ENCODE measurements at regions of chr19 and their contacts with region 1.

Region 1: GRCh38 chr19:28985201-28985600 is 227.8 kb downstream of the UQCRFS1 start:
- DNase-seq: no peak
- ATAC-seq: no peak
- H3K4me3 Mint-ChIP-seq: no peak overlapping the region
- H3K27ac Mint-ChIP-seq: no peak overlapping the region
- H3K4me1 Mint-ChIP-seq: no peaks in the 10 kb centered on the region
- H3K27me3 Mint-ChIP-seq: peaks cover 6% of the 10 kb centered on the region

Region 2: GRCh38 chr19:30529876-30530275 is 1544.7 kb after region 1 on chr19:
- CTCF ChIA-PET with region 1: no interaction called
- POLR2A ChIA-PET with region 1: no interaction called
- intact Hi-C with region 1: loop called in 1 of 2 experiments (anchors 5 kb)
- DNase-seq: no peak
- ATAC-seq: no peak
- H3K4me3 Mint-ChIP-seq: no peak overlapping the region
- H3K27ac Mint-ChIP-seq: no peak overlapping the region
- H3K4me1 Mint-ChIP-seq: no peaks in the 10 kb centered on the region
- H3K27me3 Mint-ChIP-seq: no peaks in the 10 kb centered on the region